CD4-positive, alpha-beta T cell (primary cell): ENCODE measurements at regions of chr12 and their contacts with region 1.

Region 1: DNA sequence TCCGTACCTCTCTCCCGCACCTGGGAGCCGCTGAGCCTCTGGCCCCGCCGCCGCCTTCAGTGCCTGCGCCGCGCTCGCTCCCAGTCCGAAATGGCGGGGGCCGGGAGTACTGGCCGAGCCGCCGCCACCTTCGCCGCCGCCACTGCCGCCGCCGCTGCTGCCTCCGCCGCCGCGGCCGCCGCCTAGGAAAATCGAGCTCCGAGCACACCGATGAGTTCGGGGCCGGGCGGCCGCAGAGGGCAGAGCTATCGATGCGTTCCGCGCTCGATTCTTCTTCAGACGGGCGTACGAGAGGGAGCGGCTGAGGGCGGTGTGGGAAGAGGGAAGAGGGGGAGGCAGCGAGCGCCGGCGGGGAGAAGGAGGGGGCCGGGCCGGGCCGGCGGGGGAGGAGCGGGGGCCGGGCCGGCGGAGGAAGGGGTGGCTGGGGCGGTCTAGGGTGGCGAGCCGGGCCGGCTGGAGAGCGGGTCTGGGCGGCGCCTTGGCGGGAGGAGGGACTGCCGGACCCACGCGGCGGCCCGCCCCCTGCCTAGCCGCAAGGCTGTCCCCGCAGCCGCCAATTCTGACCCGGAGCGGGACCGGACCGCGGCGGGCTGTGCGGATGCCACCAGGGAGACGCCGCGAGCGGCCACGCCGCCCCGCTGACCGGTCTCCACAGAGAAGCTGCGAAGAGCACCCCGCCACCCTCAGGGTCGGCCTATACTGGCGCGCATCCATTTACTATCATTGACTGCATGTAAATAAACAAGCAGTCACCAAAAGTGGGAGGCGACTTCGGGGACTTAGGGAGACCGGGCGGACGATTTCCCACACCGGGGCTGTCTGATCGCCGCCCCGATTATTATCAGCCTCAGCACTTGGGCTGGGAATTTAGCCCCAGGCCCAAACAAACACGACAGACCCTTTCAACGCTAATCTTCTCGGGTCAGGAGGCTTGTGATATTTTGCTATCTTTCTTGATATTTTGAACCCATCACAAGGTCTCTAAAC is at the start of gene KRAS:
- DNase-seq: peak; percentile 83 to 97 (median 89)
- ATAC-seq: peak; percentile 91
- H3K4me3 ChIP-seq: peak within 1 kb of the TSS; percentile 85
- H3K4me3 Mint-ChIP-seq: peak within 1 kb of the TSS; percentile 99
- H3K27ac ChIP-seq: peak within 1 kb of the TSS; percentile 52 to 73
- H3K27ac Mint-ChIP-seq: peak within 1 kb of the TSS; percentile 85
- H3K4me1 ChIP-seq: peaks cover 29% of the 10 kb centered on the region
- H3K4me1 Mint-ChIP-seq: peaks cover 53% of the 10 kb centered on the region
- H3K27me3 ChIP-seq: no peaks in the 10 kb centered on the region
- H3K27me3 Mint-ChIP-seq: no peaks in the 10 kb centered on the region
- CTCF ChIP-seq: no peak
- total RNA-seq, gene KRAS: 45.0 to 48.7 TPM

Region 2: GRCh38 chr12:25195056-25195971 is 55.7 kb before region 1 on chr12 and contains the starts of genes DNAI7 and ETFRF1:
- CTCF ChIA-PET with region 1: no interaction called
- POLR2A ChIA-PET with region 1: interaction called, 14 read pairs
- intact Hi-C with region 1: no loop called
- DNase-seq: peak; percentile 89 to 98 (median 95)
- ATAC-seq: peak; percentile 94
- H3K4me3 ChIP-seq: peak within 1 kb of the TSS; percentile 90
- H3K4me3 Mint-ChIP-seq: peak within 1 kb of the TSS; percentile 98
- H3K27ac ChIP-seq: peak within 1 kb of the TSS; percentile 92 to 96
- H3K27ac Mint-ChIP-seq: peak within 1 kb of the TSS; percentile 98
- H3K4me1 ChIP-seq: peaks cover 14% of the 10 kb centered on the region
- H3K4me1 Mint-ChIP-seq: peaks cover 51% of the 10 kb centered on the region
- H3K27me3 ChIP-seq: no peaks in the 10 kb centered on the region
- H3K27me3 Mint-ChIP-seq: no peaks in the 10 kb centered on the region
- CTCF ChIP-seq: no peak
- total RNA-seq, gene DNAI7: 0.36 TPM in 1 of 2 experiments, not detected in the other
- total RNA-seq, gene ETFRF1: 32.9 to 39.8 TPM

Region 3: DNA sequence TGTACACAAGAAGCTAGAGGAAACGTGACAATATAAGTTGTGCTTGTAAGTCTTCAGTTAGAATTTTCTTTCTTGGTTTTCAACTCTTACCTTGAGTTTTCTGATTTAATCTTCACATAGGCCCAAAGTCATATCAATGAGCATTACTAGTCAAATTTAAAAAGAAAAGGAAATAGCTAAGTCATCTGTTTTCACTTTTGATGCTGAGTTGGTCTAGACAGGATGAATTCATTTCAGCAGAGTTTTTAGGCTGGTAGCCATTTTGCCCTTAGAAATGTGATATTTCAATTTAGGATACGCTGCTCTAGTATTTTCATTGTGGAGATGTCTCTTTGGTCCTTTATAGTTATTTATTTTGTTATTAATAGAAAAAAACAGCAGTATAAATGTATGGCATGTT is 44.3 kb after region 1 on chr12:
- CTCF ChIA-PET with region 1: no interaction called
- POLR2A ChIA-PET with region 1: interaction called, 3 read pairs
- intact Hi-C with region 1: loop called in 1 of 2 experiments (anchors 5 kb)
- DNase-seq: no peak
- ATAC-seq: peak; percentile 43
- H3K4me3 ChIP-seq: no peak overlapping the region
- H3K4me3 Mint-ChIP-seq: no peak overlapping the region
- H3K27ac ChIP-seq: no peak overlapping the region
- H3K27ac Mint-ChIP-seq: no peak overlapping the region
- H3K4me1 ChIP-seq: no peaks in the 10 kb centered on the region
- H3K4me1 Mint-ChIP-seq: peaks cover 11% of the 10 kb centered on the region
- H3K27me3 ChIP-seq: no peaks in the 10 kb centered on the region
- H3K27me3 Mint-ChIP-seq: no peaks in the 10 kb centered on the region
- CTCF ChIP-seq: no peak

Region 4: GRCh38 chr12:25320123-25321006 is 69.3 kb after region 1 on chr12:
- CTCF ChIA-PET with region 1: interaction called, 3 read pairs
- POLR2A ChIA-PET with region 1: interaction called, 14 read pairs
- intact Hi-C with region 1: loop called in 1 of 2 experiments (anchors 10 kb)
- DNase-seq: no peak
- ATAC-seq: no peak
- H3K4me3 ChIP-seq: no peak overlapping the region
- H3K4me3 Mint-ChIP-seq: no peak overlapping the region
- H3K27ac ChIP-seq: no peak overlapping the region
- H3K27ac Mint-ChIP-seq: no peak overlapping the region
- H3K4me1 ChIP-seq: peaks cover 25% of the 10 kb centered on the region
- H3K4me1 Mint-ChIP-seq: peaks cover 48% of the 10 kb centered on the region
- H3K27me3 ChIP-seq: no peaks in the 10 kb centered on the region
- H3K27me3 Mint-ChIP-seq: no peaks in the 10 kb centered on the region
- CTCF ChIP-seq: no peak

Region 5: DNA sequence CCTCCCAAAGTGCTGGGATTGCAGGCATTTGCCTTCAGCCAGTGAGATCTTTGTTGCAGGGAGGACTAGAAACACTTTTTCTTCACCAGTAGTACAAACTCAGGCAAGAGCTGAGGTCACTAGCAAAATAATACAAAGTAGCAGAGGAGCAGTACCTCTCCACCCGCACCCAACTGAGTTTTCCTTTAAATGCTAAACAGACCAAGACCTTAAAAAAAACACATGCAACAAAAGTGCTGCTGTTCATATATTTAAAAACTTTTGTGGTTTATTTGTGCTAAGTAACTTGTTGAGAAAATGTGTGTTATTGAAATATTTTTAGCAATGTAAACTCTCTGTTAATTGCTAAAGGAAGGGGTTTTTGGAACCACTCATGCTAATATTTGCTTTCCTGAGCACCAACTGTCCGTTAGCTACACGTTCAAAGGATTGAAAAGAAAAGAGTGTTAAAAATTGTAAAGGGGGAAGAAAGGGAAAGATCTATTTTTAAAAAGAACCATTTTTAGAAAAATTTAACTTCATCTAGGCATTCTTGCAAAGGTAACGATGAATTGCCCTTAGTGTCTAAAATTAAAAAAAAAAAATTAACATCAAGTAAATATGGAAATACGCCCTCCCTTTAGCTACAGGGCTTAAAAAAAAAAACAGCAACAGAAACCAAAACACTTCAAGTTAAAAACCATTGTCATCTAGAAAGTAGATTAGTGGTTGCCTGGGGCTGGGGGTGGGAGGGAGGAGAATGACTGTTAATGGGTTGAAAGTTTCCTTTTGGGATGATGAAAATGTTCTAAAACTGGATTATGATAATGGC is 113.7 kb after region 1 on chr12:
- CTCF ChIA-PET with region 1: no interaction called
- POLR2A ChIA-PET with region 1: interaction called, 17 read pairs
- intact Hi-C with region 1: no loop called
- DNase-seq: peak in 1 of 14 experiments; percentile 32
- ATAC-seq: peak; percentile 61
- H3K4me3 ChIP-seq: no peak overlapping the region
- H3K4me3 Mint-ChIP-seq: peak overlapping the region; percentile 22
- H3K27ac ChIP-seq: no peak overlapping the region
- H3K27ac Mint-ChIP-seq: no peak overlapping the region
- H3K4me1 ChIP-seq: no peaks in the 10 kb centered on the region
- H3K4me1 Mint-ChIP-seq: peaks cover 19% of the 10 kb centered on the region
- H3K27me3 ChIP-seq: no peaks in the 10 kb centered on the region
- H3K27me3 Mint-ChIP-seq: no peaks in the 10 kb centered on the region
- CTCF ChIP-seq: no peak

Region 6: DNA sequence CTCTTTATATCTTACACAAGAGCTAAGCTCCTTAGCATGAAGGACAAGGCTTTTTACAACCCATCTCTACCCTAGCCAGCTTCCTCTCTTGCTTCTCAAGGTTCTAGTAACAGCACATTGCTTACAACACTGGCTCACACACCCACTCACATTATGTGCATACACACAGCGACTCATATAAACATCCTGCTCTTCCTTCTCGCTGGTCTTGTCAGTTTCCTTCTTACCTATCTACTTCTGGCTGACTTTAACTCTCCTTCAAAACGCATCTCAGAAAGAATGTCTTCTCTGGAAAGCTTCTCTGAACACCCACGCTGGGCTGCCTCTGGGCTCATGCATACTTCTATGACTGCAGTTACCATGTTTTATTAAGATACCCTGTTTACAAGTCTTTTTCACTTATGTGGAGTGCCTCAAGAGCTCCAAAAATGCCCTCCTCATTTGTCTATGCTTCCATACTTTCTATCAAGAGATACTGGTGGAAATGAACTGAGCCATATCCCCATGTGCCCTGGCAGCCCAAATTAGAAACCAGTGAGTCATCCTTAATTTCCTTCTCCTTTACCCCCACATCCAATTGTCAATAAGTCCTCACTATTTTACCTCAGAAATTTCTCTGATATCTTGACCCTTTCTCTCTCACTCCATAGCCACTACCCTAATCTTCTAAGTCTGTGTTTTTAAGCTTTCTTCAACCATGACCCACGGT is 126.6 kb after region 1 on chr12:
- CTCF ChIA-PET with region 1: interaction called, 4 read pairs
- POLR2A ChIA-PET with region 1: interaction called, 32 read pairs
- intact Hi-C with region 1: no loop called
- DNase-seq: peak in 12 of 14 experiments; percentile 6 to 79 (median 29)
- ATAC-seq: peak; percentile 92
- H3K4me3 ChIP-seq: no peak overlapping the region
- H3K4me3 Mint-ChIP-seq: peak overlapping the region; percentile 63
- H3K27ac ChIP-seq: peak overlapping the region; percentile 26 to 65
- H3K27ac Mint-ChIP-seq: peak overlapping the region; percentile 89
- H3K4me1 ChIP-seq: peaks cover 30% of the 10 kb centered on the region
- H3K4me1 Mint-ChIP-seq: peaks cover 47% of the 10 kb centered on the region
- H3K27me3 ChIP-seq: no peaks in the 10 kb centered on the region
- H3K27me3 Mint-ChIP-seq: no peaks in the 10 kb centered on the region
- CTCF ChIP-seq: no peak

Region 7: DNA sequence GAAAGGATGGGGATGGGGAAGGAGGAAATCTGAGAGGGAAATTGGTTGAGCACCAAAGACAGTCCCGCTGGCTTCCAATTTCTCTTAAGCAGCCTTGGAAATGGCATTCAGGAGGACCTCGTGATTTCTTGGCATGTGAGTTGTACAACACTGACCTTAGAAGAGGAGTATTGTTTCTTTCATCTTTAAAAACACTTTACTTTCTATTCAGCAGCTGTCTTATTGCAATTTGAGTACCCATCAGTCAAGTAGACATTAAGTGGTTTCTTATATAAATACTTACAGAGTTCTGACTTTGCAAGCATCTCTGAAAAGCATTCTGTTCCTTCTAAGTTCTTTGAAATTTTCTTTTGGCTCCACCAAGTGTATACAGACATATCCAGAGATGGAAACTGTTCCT is 218.8 kb after region 1 on chr12:
- CTCF ChIA-PET with region 1: no interaction called
- POLR2A ChIA-PET with region 1: no interaction called
- intact Hi-C with region 1: no loop called
- DNase-seq: no peak
- ATAC-seq: no peak
- H3K4me3 ChIP-seq: no peak overlapping the region
- H3K4me3 Mint-ChIP-seq: no peak overlapping the region
- H3K27ac ChIP-seq: no peak overlapping the region
- H3K27ac Mint-ChIP-seq: no peak overlapping the region
- H3K4me1 ChIP-seq: no peaks in the 10 kb centered on the region
- H3K4me1 Mint-ChIP-seq: no peaks in the 10 kb centered on the region
- H3K27me3 ChIP-seq: no peaks in the 10 kb centered on the region
- H3K27me3 Mint-ChIP-seq: no peaks in the 10 kb centered on the region
- CTCF ChIP-seq: no peak